Activated naive CD4-positive, alpha-beta T cell treated with anti-CD3 and anti-CD28 coated beads for 36 hours (primary cell): ENCODE measurements at regions of chr10 and their contacts with region 1.

Region 1: DNA sequence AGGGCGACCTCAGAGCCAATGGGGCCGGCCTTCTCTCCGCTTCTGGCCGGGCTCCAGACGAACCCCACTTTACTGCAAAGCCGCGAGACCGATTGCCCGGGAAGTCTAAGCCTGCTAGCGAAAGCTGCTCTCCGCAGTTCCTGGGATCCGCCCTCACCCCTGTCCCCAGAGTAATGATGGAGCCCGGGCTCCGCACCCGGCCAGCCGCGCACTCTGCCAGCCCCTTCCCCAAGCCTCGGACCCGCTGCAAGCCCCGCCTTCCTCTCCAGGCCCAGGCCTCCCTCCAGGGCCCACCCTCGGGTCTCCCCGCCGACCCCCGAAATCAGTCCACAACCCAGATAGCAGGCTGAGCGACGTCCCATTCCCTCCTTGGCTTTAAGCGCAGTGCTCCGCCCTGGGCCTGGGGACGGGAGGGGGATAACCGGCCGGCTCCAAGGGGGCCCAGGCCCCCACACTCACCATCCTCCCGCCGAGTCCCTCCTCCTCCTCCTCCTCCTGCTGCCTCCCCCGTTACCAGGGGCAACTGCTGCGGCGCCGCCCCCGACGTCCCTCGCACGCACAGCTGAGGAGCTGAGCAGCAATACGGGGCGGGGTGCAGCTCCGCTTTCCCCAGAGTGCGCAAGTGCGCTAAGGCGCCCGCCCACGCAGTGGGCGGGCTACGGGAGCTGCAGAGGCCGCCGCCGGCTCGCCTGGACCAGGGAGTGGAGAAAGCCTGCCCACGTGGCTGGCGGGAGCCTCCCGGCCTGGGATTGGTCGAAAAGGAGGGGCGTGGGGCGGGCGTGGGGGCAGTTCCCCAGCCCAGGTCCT is at the start of gene ARL3:
- DNase-seq: peak; percentile 98
- H3K4me3 Mint-ChIP-seq: peak within 1 kb of the TSS; percentile 92
- H3K27ac Mint-ChIP-seq: peak within 1 kb of the TSS; percentile 79
- H3K4me1 Mint-ChIP-seq: peaks cover 44% of the 10 kb centered on the region
- H3K27me3 Mint-ChIP-seq: no peaks in the 10 kb centered on the region
- total RNA-seq, gene ARL3: 3.9 TPM

Region 2: GRCh38 chr10:102151774-102152544 is 562.1 kb before region 1 on chr10 and contains the start of gene NOLC1:
- CTCF ChIA-PET with region 1: no interaction called
- intact Hi-C with region 1: loop called (anchors 1 kb)
- DNase-seq: peak; percentile 100
- H3K4me3 Mint-ChIP-seq: peak within 1 kb of the TSS; percentile 98
- H3K27ac Mint-ChIP-seq: peak within 1 kb of the TSS; percentile 96
- H3K4me1 Mint-ChIP-seq: peaks cover 53% of the 10 kb centered on the region
- H3K27me3 Mint-ChIP-seq: no peaks in the 10 kb centered on the region
- total RNA-seq, gene NOLC1: 182 to 194 TPM

Region 3: DNA sequence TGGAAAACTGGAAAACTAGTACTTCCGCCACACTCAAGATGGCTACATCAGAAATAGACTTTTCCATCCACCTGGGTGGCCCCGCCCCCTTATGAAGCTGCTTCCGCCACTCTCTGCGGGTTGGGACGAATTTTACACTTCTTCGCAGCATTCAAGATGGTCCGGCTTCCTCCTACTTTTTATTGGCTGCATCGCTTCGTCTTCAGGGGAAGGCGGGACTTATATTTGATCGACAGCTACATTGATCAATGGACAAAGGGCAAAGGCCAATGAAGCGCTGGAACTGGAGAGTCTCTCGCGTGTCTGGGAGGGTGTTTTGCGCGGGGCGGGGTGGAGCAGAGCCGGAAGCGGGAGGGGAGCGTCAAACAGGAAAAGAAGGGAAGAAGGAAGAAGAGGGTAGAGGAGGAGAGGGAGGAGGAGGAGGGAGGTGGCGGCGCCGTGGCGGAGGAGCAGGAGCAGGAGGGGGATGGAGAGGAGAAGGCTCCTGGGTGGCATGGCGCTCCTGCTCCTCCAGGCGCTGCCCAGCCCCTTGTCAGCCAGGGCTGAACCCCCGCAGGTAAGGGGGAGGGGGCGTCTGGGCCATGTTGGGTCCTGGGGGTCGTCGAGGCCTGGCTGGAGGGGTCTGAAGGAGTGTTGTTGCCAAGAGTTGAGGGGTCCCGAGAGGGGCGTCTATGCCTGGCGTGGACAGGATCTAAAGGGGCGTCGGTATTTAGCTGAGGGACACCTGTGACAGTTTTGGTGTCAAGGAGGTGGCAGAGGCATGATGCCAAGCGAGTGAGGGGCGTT is 29.8 kb after region 1 on chr10 and contains the start of gene WBP1L:
- CTCF ChIA-PET with region 1: interaction called, 3 read pairs
- intact Hi-C with region 1: loop called (anchors 1 kb)
- DNase-seq: peak; percentile 97
- H3K4me3 Mint-ChIP-seq: peak within 1 kb of the TSS; percentile 90
- H3K27ac Mint-ChIP-seq: peak within 1 kb of the TSS; percentile 83
- H3K4me1 Mint-ChIP-seq: peaks cover 43% of the 10 kb centered on the region
- H3K27me3 Mint-ChIP-seq: no peaks in the 10 kb centered on the region
- total RNA-seq, gene WBP1L: 10.5 to 11.8 TPM

Region 4: DNA sequence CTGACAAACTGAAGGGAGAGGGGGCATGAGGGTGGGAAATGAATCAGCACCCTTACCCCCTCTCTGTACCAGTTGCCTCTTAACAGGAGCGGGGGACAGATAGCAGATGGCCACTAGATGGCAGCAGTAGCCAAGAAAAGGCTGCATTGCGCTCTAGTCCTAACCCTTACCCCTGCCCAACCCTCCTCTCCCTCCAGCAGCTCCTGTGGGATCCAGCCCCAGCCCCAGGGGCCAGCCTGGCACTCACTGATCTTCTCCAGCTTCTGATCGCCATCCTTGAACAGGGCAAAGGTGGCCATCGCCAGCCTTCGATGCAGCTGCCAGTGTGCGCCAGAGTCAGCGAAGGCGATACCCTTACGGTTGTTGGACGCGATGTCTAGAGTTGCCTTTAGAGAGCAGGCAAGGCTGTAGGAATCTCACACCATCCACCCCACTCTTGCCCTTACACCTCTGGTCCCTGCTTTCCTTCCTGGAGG is 121.0 kb after region 1 on chr10:
- CTCF ChIA-PET with region 1: no interaction called
- intact Hi-C with region 1: no loop called
- DNase-seq: peak; percentile 85
- H3K4me3 Mint-ChIP-seq: no peak overlapping the region
- H3K27ac Mint-ChIP-seq: no peak overlapping the region
- H3K4me1 Mint-ChIP-seq: no peaks in the 10 kb centered on the region
- H3K27me3 Mint-ChIP-seq: peaks cover 3% of the 10 kb centered on the region

Region 5: DNA sequence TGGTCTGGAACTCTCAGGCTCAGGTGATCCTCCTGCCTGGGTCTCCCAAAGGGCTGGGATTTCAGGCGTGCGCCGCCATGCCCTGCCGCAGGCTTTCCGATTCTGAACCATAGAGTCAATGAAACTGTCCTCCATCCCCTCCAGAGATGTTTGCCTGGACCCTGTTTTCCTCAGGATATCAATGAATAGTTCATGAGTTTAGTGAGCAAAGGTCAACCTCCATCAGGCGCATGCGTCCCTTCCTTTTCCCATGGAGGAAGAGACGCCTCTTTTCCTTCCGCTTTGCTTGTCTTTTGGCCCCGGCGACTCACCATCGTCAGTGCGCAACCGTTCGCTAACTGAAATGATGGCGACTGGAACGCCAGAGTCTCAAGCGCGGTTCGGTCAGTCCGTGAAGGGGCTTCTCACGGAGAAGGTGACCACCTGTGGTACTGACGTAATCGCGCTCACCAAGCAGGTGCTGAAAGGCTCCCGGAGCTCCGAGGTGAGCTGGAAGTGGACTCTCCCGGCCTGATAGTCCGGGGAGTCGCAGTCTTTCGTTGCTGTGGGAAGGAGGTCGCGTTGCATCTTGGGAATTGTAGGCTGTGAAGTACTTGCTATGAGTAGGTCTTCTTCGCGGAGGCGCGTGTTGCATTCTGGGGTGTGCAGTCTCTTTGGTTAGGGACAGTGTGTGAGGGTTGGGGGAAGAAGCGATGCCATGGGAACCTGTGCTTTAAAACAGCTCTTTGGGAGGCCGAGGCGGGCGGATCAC is 140.1 kb after region 1 on chr10 and contains the start of gene BORCS7:
- CTCF ChIA-PET with region 1: no interaction called
- intact Hi-C with region 1: loop called (anchors 1 kb)
- DNase-seq: peak; percentile 95
- H3K4me3 Mint-ChIP-seq: peak within 1 kb of the TSS; percentile 95
- H3K27ac Mint-ChIP-seq: peak within 1 kb of the TSS; percentile 97
- H3K4me1 Mint-ChIP-seq: peaks cover 17% of the 10 kb centered on the region
- H3K27me3 Mint-ChIP-seq: no peaks in the 10 kb centered on the region
- total RNA-seq, gene BORCS7: 5.6 to 5.8 TPM

Region 6: DNA sequence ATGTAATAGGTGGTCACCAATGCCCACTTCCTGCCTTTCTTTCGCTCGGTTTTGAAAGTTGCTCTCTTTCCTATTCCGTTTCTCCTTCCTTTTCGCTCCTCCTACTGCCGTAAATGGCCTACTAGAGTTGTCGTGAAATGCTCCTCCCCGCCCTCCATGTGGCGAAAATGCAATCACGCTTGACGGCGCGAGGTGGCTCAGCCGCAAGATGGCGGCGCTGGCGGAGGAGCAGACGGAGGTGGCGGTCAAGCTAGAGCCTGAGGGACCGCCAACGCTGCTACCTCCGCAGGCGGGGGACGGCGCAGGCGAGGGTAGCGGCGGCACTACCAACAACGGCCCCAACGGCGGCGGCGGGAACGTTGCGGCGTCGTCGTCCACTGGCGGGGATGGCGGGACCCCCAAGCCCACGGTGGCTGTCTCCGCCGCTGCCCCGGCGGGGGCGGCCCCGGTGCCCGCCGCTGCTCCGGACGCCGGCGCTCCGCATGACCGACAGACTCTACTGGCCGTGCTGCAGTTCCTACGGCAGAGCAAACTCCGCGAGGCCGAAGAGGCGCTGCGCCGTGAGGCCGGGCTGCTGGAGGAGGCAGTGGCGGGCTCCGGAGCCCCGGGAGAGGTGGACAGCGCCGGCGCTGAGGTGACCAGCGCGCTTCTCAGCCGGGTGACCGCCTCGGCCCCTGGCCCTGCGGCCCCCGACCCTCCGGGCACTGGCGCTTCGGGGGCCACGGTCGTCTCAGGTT is 653.9 kb after region 1 on chr10 and contains the start of gene TAF5:
- CTCF ChIA-PET with region 1: no interaction called
- intact Hi-C with region 1: loop called (anchors 5 kb)
- DNase-seq: peak; percentile 95
- H3K4me3 Mint-ChIP-seq: peak within 1 kb of the TSS; percentile 85
- H3K27ac Mint-ChIP-seq: peak within 1 kb of the TSS; percentile 87
- H3K4me1 Mint-ChIP-seq: peaks cover 18% of the 10 kb centered on the region
- H3K27me3 Mint-ChIP-seq: no peaks in the 10 kb centered on the region
- total RNA-seq, gene TAF5: 16.3 TPM